ENCODE measurements at regions of chr9 and their contacts with region 1.

Region 1: GRCh38 chr9:121009650-121010049 is 40.4 kb downstream of the C5 start:
- DNase-seq: no peak
- ATAC-seq: no peak
- H3K4me3 ChIP-seq: no peak overlapping the region
- H3K27ac ChIP-seq: no peak overlapping the region
- H3K4me1 ChIP-seq: no peaks in the 10 kb centered on the region
- H3K27me3 ChIP-seq: no peaks in the 10 kb centered on the region
- CTCF ChIP-seq: no peak
- POLR2A ChIP-seq: no peak
- RAD21 ChIP-seq: no peak

Region 2: DNA sequence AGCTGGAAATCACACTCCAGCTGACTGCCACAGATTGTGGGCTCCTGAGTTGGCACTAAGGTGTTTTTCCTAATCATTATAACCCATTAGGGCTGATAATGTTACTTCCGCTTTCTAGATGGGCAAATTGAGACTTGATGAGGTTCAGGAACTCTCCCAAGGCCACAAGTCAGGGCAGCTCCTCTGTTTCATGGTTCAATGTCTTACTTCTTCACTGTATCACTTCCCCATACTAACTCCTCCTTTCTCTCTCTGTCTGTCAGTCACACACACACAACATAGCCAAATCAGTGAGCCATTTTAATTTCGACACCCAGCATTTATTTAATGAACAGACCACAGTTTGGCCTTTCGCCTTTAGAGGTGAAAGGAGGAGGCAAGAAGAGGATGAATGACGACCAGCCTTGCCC is 65.2 kb before region 1 on chr9:
- CTCF ChIA-PET with region 1: no interaction called
- POLR2A ChIA-PET with region 1: no interaction called
- RAD21 ChIA-PET with region 1: no interaction called
- intact Hi-C with region 1: loop called (anchors 10 kb)
- DNase-seq: no peak
- ATAC-seq: no peak
- H3K4me3 ChIP-seq: no peak overlapping the region
- H3K27ac ChIP-seq: no peak overlapping the region
- H3K4me1 ChIP-seq: no peaks in the 10 kb centered on the region
- H3K27me3 ChIP-seq: no peaks in the 10 kb centered on the region
- CTCF ChIP-seq: no peak
- POLR2A ChIP-seq: no peak
- RAD21 ChIP-seq: no peak

Measured in HCT116 (cell line).